Tibial artery (tissue), 4 donors: ENCODE measurements at regions of chr3 and their contacts with region 1.

Region 1: DNA sequence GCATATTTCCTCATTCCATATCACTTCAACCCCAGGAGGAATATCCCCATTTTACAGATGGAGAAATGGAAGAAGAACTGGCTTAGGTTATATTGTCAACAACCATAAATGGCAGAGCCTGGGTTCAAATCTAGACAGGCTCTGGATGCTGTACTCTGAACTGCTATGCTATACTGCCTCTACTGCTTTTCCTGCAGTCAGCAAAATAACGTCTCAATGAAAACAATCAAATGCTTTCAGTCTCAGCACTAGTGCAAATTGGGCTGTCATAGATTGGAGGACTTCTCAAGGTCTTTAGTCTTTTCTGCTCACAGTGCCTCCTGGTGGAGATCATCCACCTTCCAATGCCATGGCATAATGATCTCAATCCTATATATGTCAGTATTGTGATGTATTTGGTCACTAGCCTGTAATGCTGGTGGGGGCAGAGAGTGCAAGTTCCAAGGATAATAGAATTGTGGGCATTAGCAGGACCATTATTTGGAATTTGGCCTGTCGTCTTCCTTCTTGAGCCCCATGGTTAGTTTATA is 285.0 kb downstream of the CLSTN2 start:
- DNase-seq: no peak
- H3K4me3 ChIP-seq: no peak overlapping the region
- H3K27ac ChIP-seq: no peak overlapping the region
- H3K4me1 ChIP-seq: no peaks in the 10 kb centered on the region
- H3K27me3 ChIP-seq: peaks cover 0 to 3% of the 10 kb centered on the region in 2 donors
- CTCF ChIP-seq: no peak

Region 2: GRCh38 chr3:139906418-139906817 is 313.6 kb before region 1 on chr3:
- intact Hi-C with region 1: no loop called
- DNase-seq: no peak
- H3K4me3 ChIP-seq: no peak overlapping the region
- H3K27ac ChIP-seq: no peak overlapping the region
- H3K4me1 ChIP-seq: no peaks in the 10 kb centered on the region
- H3K27me3 ChIP-seq: no peaks in the 10 kb centered on the region
- CTCF ChIP-seq: no peak

Region 3: GRCh38 chr3:140247775-140248174 is 27.8 kb after region 1 on chr3:
- intact Hi-C with region 1: loop called (anchors 1 kb)
- DNase-seq: no peak
- H3K4me3 ChIP-seq: no peak overlapping the region
- H3K27ac ChIP-seq: no peak overlapping the region
- H3K4me1 ChIP-seq: peaks cover 0 to 30% (median 15%) of the 10 kb centered on the region in 4 donors
- H3K27me3 ChIP-seq: no peaks in the 10 kb centered on the region
- CTCF ChIP-seq: no peak

Region 4: GRCh38 chr3:140270329-140270728 is 50.3 kb after region 1 on chr3:
- intact Hi-C with region 1: no loop called
- DNase-seq: no peak
- H3K4me3 ChIP-seq: no peak overlapping the region
- H3K27ac ChIP-seq: no peak overlapping the region
- H3K4me1 ChIP-seq: no peaks in the 10 kb centered on the region
- H3K27me3 ChIP-seq: no peaks in the 10 kb centered on the region
- CTCF ChIP-seq: no peak